ENCODE measurements at regions of chr3 and their contacts with region 1.

Region 1: GRCh38 chr3:13091898-13092611 is 18.8 kb upstream of the IQSEC1 start:
- DNase-seq: peak; percentile 90
- ATAC-seq: peak; percentile 92
- H3K4me3 Mint-ChIP-seq: no peak overlapping the region
- H3K27ac Mint-ChIP-seq: no peak overlapping the region
- H3K4me1 Mint-ChIP-seq: peaks cover 2% of the 10 kb centered on the region
- H3K27me3 Mint-ChIP-seq: no peaks in the 10 kb centered on the region

Region 2: GRCh38 chr3:13019243-13020095 is 72.6 kb before region 1 on chr3:
- CTCF ChIA-PET with region 1: no interaction called
- POLR2A ChIA-PET with region 1: no interaction called
- intact Hi-C with region 1: no loop called
- DNase-seq: no peak
- ATAC-seq: no peak
- H3K4me3 Mint-ChIP-seq: no peak overlapping the region
- H3K27ac Mint-ChIP-seq: no peak overlapping the region
- H3K4me1 Mint-ChIP-seq: peaks cover 19% of the 10 kb centered on the region
- H3K27me3 Mint-ChIP-seq: no peaks in the 10 kb centered on the region

Region 3: GRCh38 chr3:13073326-13074005 is 18.6 kb before region 1 on chr3 and contains the start of gene IQSEC1:
- CTCF ChIA-PET with region 1: interaction called, 12 read pairs
- POLR2A ChIA-PET with region 1: no interaction called
- intact Hi-C with region 1: no loop called
- DNase-seq: peak; percentile 89
- ATAC-seq: peak; percentile 68
- H3K4me3 Mint-ChIP-seq: peak within 1 kb of the TSS; percentile 80
- H3K27ac Mint-ChIP-seq: peak within 1 kb of the TSS; percentile 51
- H3K4me1 Mint-ChIP-seq: peaks cover 34% of the 10 kb centered on the region
- H3K27me3 Mint-ChIP-seq: peaks cover 21% of the 10 kb centered on the region
- total RNA-seq, gene IQSEC1: 36.8 to 40.4 TPM

Region 4: GRCh38 chr3:13106308-13107001 is 14.4 kb after region 1 on chr3:
- CTCF ChIA-PET with region 1: interaction called, 21 read pairs
- POLR2A ChIA-PET with region 1: no interaction called
- intact Hi-C with region 1: no loop called
- DNase-seq: no peak
- ATAC-seq: no peak
- H3K4me3 Mint-ChIP-seq: no peak overlapping the region
- H3K27ac Mint-ChIP-seq: no peak overlapping the region
- H3K4me1 Mint-ChIP-seq: peaks cover 7% of the 10 kb centered on the region
- H3K27me3 Mint-ChIP-seq: no peaks in the 10 kb centered on the region

Region 5: DNA sequence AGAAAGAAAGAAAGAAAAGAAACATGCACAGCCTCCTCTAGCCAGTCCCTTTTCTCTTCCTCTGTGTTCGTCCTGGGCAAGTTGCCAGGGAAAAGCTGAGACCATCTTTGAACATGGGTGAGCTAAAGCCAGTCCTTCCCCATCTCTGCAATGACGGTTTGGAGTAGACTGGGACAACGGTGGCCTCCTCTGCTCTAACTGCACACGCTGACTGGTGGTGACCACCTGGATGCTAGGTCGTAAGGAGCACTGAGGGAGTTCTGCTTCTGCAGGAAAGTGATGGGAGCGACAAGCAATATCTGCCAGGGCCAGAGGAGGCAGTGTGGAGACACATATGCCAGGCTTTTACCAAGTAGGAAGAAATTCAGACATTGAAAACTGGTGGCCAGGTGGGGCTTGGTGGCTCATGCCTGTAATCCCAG is 216.3 kb after region 1 on chr3:
- CTCF ChIA-PET with region 1: interaction called, 3 read pairs
- POLR2A ChIA-PET with region 1: no interaction called
- intact Hi-C with region 1: loop called in 1 of 2 experiments (anchors 5 kb)
- DNase-seq: peak; percentile 48
- ATAC-seq: peak; percentile 67
- H3K4me3 Mint-ChIP-seq: no peak overlapping the region
- H3K27ac Mint-ChIP-seq: no peak overlapping the region
- H3K4me1 Mint-ChIP-seq: no peaks in the 10 kb centered on the region
- H3K27me3 Mint-ChIP-seq: no peaks in the 10 kb centered on the region

Region 6: DNA sequence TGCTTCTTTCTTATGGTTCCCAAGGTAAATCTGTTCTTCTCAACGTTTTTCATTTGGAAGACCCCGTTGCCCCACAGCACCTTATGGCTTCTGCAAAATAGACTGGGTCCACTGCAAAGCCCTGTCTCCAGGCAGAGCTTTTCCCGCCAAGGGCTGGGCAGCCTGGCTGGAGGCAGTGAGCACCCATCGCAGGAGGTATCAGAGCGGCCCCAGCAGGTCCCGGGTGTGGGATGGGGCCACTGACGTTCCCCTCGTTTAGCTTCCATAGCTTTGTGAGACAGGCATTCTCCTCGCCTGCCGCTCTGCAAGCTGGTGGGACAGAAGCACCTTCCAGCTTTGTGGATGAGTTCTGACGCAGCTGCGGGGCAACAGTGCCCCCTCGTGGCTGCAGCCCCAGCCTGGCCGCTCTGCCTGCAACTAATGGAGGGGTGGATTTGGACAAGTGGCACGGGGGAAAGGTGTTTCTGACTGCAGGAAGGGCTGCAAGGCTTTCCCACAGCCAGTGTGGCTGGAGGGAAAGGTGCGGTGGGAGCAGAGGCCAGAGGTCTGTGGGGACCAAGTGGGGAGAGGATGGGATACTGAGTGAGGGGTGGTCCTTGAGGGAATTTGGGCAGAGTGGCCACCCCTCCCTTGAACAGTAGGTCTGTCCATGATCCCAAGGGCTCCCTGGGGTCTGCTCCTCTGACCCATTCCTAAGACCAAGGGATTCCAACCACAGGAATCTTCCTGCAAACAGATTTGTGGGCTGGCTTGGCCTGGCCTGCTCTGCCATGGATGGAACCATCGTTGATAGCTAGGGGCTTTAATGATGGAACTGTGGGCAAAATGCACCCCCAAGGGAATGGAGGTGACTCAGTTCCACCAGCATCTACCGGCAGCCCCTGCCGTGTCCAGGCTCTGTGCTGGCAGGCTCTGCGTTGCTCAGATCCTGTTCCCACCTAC is 556.3 kb after region 1 on chr3:
- CTCF ChIA-PET with region 1: interaction called, 14 read pairs
- POLR2A ChIA-PET with region 1: no interaction called
- intact Hi-C with region 1: loop called in 1 of 2 experiments (anchors 2 kb)
- DNase-seq: peak; percentile 87
- ATAC-seq: peak; percentile 63
- H3K4me3 Mint-ChIP-seq: no peak overlapping the region
- H3K27ac Mint-ChIP-seq: no peak overlapping the region
- H3K4me1 Mint-ChIP-seq: peaks cover 18% of the 10 kb centered on the region
- H3K27me3 Mint-ChIP-seq: peaks cover 14% of the 10 kb centered on the region